CD14-positive monocyte (primary cell): ENCODE measurements at regions of chr16 and their contacts with region 1.

Region 1: GRCh38 chr16:88005181-88005581 is 53.9 kb downstream of the BANP start:
- DNase-seq: peak; percentile 76 to 81 (median 80)
- H3K4me3 ChIP-seq: no peak overlapping the region
- H3K4me3 Mint-ChIP-seq: no peak overlapping the region
- H3K27ac ChIP-seq: peak overlapping the region in 1 of 2 donors; percentile 66
- H3K27ac Mint-ChIP-seq: peak overlapping the region; percentile 75 to 89 (median 82)
- H3K4me1 ChIP-seq: peaks cover 13 to 18% of the 10 kb centered on the region in 2 donors
- H3K4me1 Mint-ChIP-seq: peaks cover 20% of the 10 kb centered on the region
- H3K27me3 ChIP-seq: no peaks in the 10 kb centered on the region
- H3K27me3 Mint-ChIP-seq: peaks cover 0 to 4% (median 0%) of the 10 kb centered on the region in 3 donors
- CTCF ChIP-seq: peak; percentile 74

Region 2: DNA sequence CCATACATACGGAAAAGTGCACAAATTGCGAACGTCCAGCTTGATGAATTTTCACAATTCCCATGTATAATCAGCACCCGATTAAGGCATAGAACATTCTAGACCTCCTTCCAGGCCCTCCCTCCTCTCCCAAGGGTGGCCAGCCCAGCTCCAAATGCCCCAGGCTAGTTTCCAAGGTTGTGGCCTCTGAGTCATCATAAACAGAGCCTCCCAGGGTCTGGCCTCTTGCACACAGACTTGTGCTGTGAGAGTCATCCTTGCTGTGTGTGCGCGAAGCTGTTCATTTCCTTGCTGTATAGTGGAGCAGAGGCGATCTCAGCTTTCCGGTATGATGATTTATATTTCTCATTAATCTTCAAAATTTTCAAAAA is 423.4 kb before region 1 on chr16:
- intact Hi-C with region 1: no loop called
- DNase-seq: peak in 1 of 3 donors; percentile 17
- H3K4me3 ChIP-seq: no peak overlapping the region
- H3K4me3 Mint-ChIP-seq: no peak overlapping the region
- H3K27ac ChIP-seq: no peak overlapping the region
- H3K27ac Mint-ChIP-seq: no peak overlapping the region
- H3K4me1 ChIP-seq: no peaks in the 10 kb centered on the region
- H3K4me1 Mint-ChIP-seq: no peaks in the 10 kb centered on the region
- H3K27me3 ChIP-seq: peaks cover 0 to 15% of the 10 kb centered on the region in 2 donors
- H3K27me3 Mint-ChIP-seq: peaks cover 20 to 44% (median 36%) of the 10 kb centered on the region in 3 donors
- CTCF ChIP-seq: no peak

Region 3: GRCh38 chr16:87778830-87779579 is 226.2 kb before region 1 on chr16:
- intact Hi-C with region 1: loop called in 1 of 2 experiments (anchors 10 kb)
- DNase-seq: peak; percentile 97 to 98 (median 97)
- H3K4me3 ChIP-seq: peak overlapping the region in 1 of 3 experiments; percentile 30
- H3K4me3 Mint-ChIP-seq: peak overlapping the region; percentile 45 to 68
- H3K27ac ChIP-seq: peak overlapping the region; percentile 16 to 68
- H3K27ac Mint-ChIP-seq: peak overlapping the region; percentile 86 to 95 (median 90)
- H3K4me1 ChIP-seq: peaks cover 40 to 44% of the 10 kb centered on the region in 2 donors
- H3K4me1 Mint-ChIP-seq: peaks cover 40% of the 10 kb centered on the region
- H3K27me3 ChIP-seq: no peaks in the 10 kb centered on the region
- H3K27me3 Mint-ChIP-seq: peaks cover 0 to 16% (median 2%) of the 10 kb centered on the region in 3 donors
- CTCF ChIP-seq: peak; percentile 96

Region 4: GRCh38 chr16:87844120-87844733 is 161.0 kb before region 1 on chr16:
- intact Hi-C with region 1: no loop called
- DNase-seq: no peak
- H3K4me3 ChIP-seq: no peak overlapping the region
- H3K4me3 Mint-ChIP-seq: no peak overlapping the region
- H3K27ac ChIP-seq: no peak overlapping the region
- H3K27ac Mint-ChIP-seq: peak overlapping the region in 1 of 7 donors; percentile 73
- H3K4me1 ChIP-seq: no peaks in the 10 kb centered on the region
- H3K4me1 Mint-ChIP-seq: no peaks in the 10 kb centered on the region
- H3K27me3 ChIP-seq: no peaks in the 10 kb centered on the region
- H3K27me3 Mint-ChIP-seq: peaks cover 0 to 3% (median 3%) of the 10 kb centered on the region in 3 donors
- CTCF ChIP-seq: no peak

Region 5: GRCh38 chr16:87956365-87957231 is 48.6 kb before region 1 on chr16:
- intact Hi-C with region 1: loop called in 1 of 2 experiments (anchors 2 kb)
- DNase-seq: peak; percentile 87 to 93 (median 88)
- H3K4me3 ChIP-seq: peak overlapping the region; percentile 47 to 94 (median 49)
- H3K4me3 Mint-ChIP-seq: peak overlapping the region; percentile 81 to 84
- H3K27ac ChIP-seq: peak overlapping the region; percentile 97 to 99
- H3K27ac Mint-ChIP-seq: peak overlapping the region; percentile 96 to 100 (median 97)
- H3K4me1 ChIP-seq: peaks cover 74 to 86% of the 10 kb centered on the region in 2 donors
- H3K4me1 Mint-ChIP-seq: peaks cover 82% of the 10 kb centered on the region
- H3K27me3 ChIP-seq: no peaks in the 10 kb centered on the region
- H3K27me3 Mint-ChIP-seq: peaks cover 0 to 6% (median 1%) of the 10 kb centered on the region in 3 donors
- CTCF ChIP-seq: peak; percentile 38